CD4-positive, alpha-beta memory T cell (primary cell): ENCODE measurements at regions of chr1 and their contacts with region 1.

Region 1: GRCh38 chr1:244289976-244290375 is 161.7 kb downstream of the ADSS2 start:
- DNase-seq: no peak
- H3K4me3 ChIP-seq: no peak overlapping the region
- H3K4me3 Mint-ChIP-seq: no peak overlapping the region
- H3K27ac ChIP-seq: no peak overlapping the region
- H3K27ac Mint-ChIP-seq: no peak overlapping the region
- H3K4me1 ChIP-seq: no peaks in the 10 kb centered on the region
- H3K4me1 Mint-ChIP-seq: peaks cover 0 to 11% (median 6%) of the 10 kb centered on the region in 4 donors
- H3K27me3 ChIP-seq: no peaks in the 10 kb centered on the region
- H3K27me3 Mint-ChIP-seq: peaks cover 6 to 9% of the 10 kb centered on the region in 2 donors

Region 2: GRCh38 chr1:244302889-244303613 is 13.1 kb after region 1 on chr1:
- CTCF ChIA-PET with region 1: interaction called, 31 read pairs
- POLR2A ChIA-PET with region 1: no interaction called
- intact Hi-C with region 1: no loop called
- DNase-seq: no peak
- H3K4me3 ChIP-seq: no peak overlapping the region
- H3K4me3 Mint-ChIP-seq: no peak overlapping the region
- H3K27ac ChIP-seq: no peak overlapping the region
- H3K27ac Mint-ChIP-seq: no peak overlapping the region
- H3K4me1 ChIP-seq: peaks cover 10% of the 10 kb centered on the region
- H3K4me1 Mint-ChIP-seq: peaks cover 6 to 14% (median 8%) of the 10 kb centered on the region in 4 donors
- H3K27me3 ChIP-seq: no peaks in the 10 kb centered on the region
- H3K27me3 Mint-ChIP-seq: no peaks in the 10 kb centered on the region

Region 3: DNA sequence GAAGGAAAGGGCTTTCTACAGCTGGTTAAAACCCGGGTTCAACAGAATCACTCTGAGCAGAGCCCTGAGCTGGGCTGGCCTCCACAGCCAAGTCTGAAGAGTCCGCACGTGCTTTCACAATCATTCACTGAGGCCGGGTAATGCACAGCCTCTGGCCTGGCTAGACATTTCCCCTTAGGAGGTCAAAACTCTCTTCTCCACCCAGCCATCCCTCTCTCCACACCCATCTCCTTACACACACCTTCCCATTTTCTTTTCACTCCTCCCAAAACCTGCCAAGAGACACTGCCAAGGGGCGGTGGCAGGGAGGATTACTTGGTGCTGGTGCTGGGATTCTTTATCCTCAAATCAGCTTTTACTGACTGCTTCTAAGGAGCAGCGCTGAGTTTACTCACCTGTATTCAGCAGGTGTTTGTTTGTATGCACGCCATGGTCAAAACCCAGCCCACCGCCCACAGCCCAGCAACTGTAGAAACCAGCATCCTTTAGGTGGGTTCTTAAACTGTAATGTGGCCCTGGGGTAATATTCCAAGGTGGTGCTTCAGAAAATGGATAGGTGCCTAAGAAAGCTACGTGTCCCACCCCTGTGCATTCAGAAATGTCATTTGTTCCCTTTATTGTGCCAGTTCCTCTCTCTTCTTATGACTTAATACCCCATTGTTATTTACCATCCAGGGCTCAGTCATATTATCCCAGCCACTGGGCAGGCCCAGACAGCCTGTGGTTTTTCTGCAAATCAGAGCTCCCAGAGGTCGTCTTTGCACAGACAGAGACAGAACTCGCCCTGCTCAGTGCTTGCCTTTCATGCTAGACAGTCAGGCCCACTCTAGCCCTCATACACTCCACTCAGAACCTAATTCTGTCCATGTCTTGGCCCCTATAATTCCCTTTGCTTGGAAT is 81.5 kb after region 1 on chr1:
- CTCF ChIA-PET with region 1: no interaction called
- POLR2A ChIA-PET with region 1: no interaction called
- intact Hi-C with region 1: no loop called
- DNase-seq: no peak
- H3K4me3 ChIP-seq: no peak overlapping the region
- H3K4me3 Mint-ChIP-seq: no peak overlapping the region
- H3K27ac ChIP-seq: no peak overlapping the region
- H3K27ac Mint-ChIP-seq: peak overlapping the region in 1 of 7 donors; percentile 5
- H3K4me1 ChIP-seq: no peaks in the 10 kb centered on the region
- H3K4me1 Mint-ChIP-seq: peaks cover 0 to 3% (median 0%) of the 10 kb centered on the region in 4 donors
- H3K27me3 ChIP-seq: no peaks in the 10 kb centered on the region
- H3K27me3 Mint-ChIP-seq: no peaks in the 10 kb centered on the region

Region 4: DNA sequence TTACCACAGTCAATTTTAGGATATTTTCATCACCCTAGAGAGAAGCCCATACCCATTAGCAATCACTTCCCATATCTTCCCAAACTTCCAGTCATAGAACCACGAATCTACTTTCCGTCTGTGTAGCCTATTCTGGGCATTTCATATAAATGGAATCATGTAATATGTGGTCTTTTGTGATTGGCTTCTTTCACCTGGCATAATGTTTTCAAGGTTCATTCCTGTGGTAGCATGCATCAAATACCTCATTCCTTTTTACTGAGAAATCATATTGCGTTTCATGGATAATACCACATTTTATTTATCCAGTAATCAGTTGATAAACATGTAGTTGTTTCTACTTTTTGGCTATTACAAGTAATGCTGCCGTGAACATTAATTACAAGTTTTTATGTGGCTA is 384.5 kb after region 1 on chr1:
- CTCF ChIA-PET with region 1: no interaction called
- POLR2A ChIA-PET with region 1: no interaction called
- intact Hi-C with region 1: no loop called
- DNase-seq: no peak
- H3K4me3 ChIP-seq: no peak overlapping the region
- H3K4me3 Mint-ChIP-seq: no peak overlapping the region
- H3K27ac ChIP-seq: no peak overlapping the region
- H3K27ac Mint-ChIP-seq: no peak overlapping the region
- H3K4me1 ChIP-seq: no peaks in the 10 kb centered on the region
- H3K4me1 Mint-ChIP-seq: peaks cover 16 to 28% (median 24%) of the 10 kb centered on the region in 4 donors
- H3K27me3 ChIP-seq: no peaks in the 10 kb centered on the region
- H3K27me3 Mint-ChIP-seq: no peaks in the 10 kb centered on the region